GM12878 (cell line): ENCODE measurements at regions of chr18 and their contacts with region 1.

Region 1: DNA sequence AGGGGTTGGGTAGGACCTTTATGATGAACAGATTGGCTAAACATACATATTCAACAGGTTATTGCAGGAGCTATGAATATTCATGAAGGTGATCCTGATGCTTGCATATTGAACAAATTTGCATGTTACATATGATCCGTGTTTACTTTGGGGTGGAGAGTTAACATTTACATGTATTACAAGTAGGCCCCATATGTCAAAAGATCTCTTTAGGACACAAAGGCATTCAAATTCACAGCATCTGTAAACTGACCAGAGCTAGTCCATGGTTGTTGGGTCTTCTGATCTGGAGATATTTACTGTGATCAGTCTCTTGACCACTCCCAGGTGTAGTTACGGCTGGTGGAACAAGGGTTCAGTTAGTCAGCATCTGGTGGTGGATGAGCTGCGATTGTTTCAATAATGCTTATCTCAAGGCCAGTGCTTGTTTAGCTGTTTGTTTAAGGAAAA is 80.4 kb downstream of the PMAIP1 start:
- DNase-seq: no peak
- ATAC-seq: no peak
- H3K4me3 ChIP-seq: no peak overlapping the region
- H3K27ac ChIP-seq: no peak overlapping the region
- H3K4me1 ChIP-seq: no peaks in the 10 kb centered on the region
- H3K27me3 ChIP-seq: no peaks in the 10 kb centered on the region
- CTCF ChIP-seq: no peak
- EP300 ChIP-seq: no peak
- POLR2A ChIP-seq: no peak
- RAD21 ChIP-seq: no peak

Region 2: DNA sequence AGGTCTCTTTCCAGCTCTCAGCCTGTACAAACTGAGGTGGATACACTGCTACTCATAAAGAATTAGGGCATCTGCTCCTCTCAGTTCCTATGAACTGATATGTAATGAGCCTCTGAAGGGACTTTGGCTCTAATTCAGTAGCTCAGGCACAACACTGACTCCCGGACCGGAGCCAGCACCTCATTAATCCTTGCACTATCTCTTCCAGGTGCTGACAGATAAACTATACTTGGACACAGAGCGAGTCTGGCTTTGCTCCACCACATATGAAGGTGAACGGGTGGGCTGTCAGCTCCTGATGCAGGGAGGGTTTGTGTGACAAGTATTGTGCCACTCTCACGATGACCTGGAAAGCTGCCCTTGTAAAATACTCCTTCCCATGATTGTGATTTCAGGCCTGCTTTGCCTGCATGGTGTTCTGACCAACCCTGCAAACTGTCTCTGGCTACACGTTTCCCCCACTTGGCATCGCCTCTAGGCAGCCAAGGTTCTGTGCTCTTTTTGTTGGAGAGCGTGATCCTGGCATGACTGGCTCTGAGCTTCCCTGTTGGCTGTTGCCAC is 509.6 kb before region 1 on chr18:
- CTCF ChIA-PET with region 1: no interaction called
- POLR2A ChIA-PET with region 1: no interaction called
- RAD21 ChIA-PET with region 1: no interaction called
- SMC1A ChIA-PET with region 1: no interaction called
- in situ Hi-C with region 1: no loop called
- intact Hi-C with region 1: no loop called
- DNase-seq: no peak
- ATAC-seq: no peak
- H3K4me3 ChIP-seq: no peak overlapping the region
- H3K27ac ChIP-seq: no peak overlapping the region
- H3K4me1 ChIP-seq: no peaks in the 10 kb centered on the region
- H3K27me3 ChIP-seq: no peaks in the 10 kb centered on the region; a peak in 2 of 4 replicates
- CTCF ChIP-seq: no peak
- EP300 ChIP-seq: no peak
- POLR2A ChIP-seq: no peak
- RAD21 ChIP-seq: no peak

Region 3: DNA sequence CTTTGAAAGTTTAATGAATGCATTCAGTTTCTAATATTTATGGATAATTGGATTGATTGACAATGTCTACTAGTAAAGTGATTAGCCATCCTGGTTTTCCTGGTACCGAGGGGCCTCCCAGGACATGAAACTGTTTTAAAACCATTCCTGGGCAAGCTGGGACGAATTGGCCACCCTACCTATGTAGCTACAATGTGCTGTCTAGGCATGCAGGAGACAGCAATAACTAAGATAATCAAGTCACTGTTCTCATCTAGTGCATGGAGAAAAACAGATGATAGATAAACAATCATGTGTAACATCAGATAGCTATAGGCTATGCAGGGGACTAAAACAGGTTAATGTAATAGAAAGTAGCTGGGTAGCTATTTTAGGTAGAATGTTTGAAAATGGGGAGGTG is 13.3 kb before region 1 on chr18:
- CTCF ChIA-PET with region 1: interaction called, 6 read pairs
- POLR2A ChIA-PET with region 1: interaction called, 3 read pairs
- RAD21 ChIA-PET with region 1: interaction called, 11 read pairs
- SMC1A ChIA-PET with region 1: interaction called, 11 read pairs
- in situ Hi-C with region 1: no loop called
- intact Hi-C with region 1: no loop called
- DNase-seq: no peak
- ATAC-seq: no peak
- H3K4me3 ChIP-seq: no peak overlapping the region
- H3K27ac ChIP-seq: no peak overlapping the region
- H3K4me1 ChIP-seq: peaks cover 2% of the 10 kb centered on the region
- H3K27me3 ChIP-seq: no peaks in the 10 kb centered on the region
- CTCF ChIP-seq: no peak
- EP300 ChIP-seq: no peak
- POLR2A ChIP-seq: no peak
- RAD21 ChIP-seq: no peak